Transverse colon (tissue), 4 donors: ENCODE measurements at regions of chr15 and their contacts with region 1.

Region 1: GRCh38 chr15:55108858-55109518 is 87.8 kb downstream of the RSL24D1 start:
- DNase-seq: peak; percentile 61
- H3K4me3 ChIP-seq: no peak overlapping the region
- H3K27ac ChIP-seq: no peak overlapping the region
- H3K4me1 ChIP-seq: no peaks in the 10 kb centered on the region
- H3K27me3 ChIP-seq: no peaks in the 10 kb centered on the region
- CTCF ChIP-seq: peak; percentile 41 to 60 (median 47)
- EP300 ChIP-seq: no peak
- POLR2A ChIP-seq: no peak

Region 2: GRCh38 chr15:53808058-53808706 is 1300.8 kb before region 1 on chr15:
- in situ Hi-C with region 1: loop called in 1 of 4 experiments (anchors 25 kb)
- intact Hi-C with region 1: no loop called
- DNase-seq: no peak
- H3K4me3 ChIP-seq: no peak overlapping the region
- H3K27ac ChIP-seq: no peak overlapping the region
- H3K4me1 ChIP-seq: peaks cover 0 to 9% (median 0%) of the 10 kb centered on the region in 4 donors
- H3K27me3 ChIP-seq: no peaks in the 10 kb centered on the region
- CTCF ChIP-seq: peak; percentile 50 to 74 (median 69)
- EP300 ChIP-seq: no peak
- POLR2A ChIP-seq: no peak

Region 3: GRCh38 chr15:54082836-54083492 is 1026.0 kb before region 1 on chr15:
- in situ Hi-C with region 1: loop called in 1 of 4 experiments (anchors 25 kb)
- intact Hi-C with region 1: no loop called
- DNase-seq: no peak
- H3K4me3 ChIP-seq: no peak overlapping the region
- H3K27ac ChIP-seq: no peak overlapping the region
- H3K4me1 ChIP-seq: no peaks in the 10 kb centered on the region
- H3K27me3 ChIP-seq: no peaks in the 10 kb centered on the region
- CTCF ChIP-seq: peak; percentile 42 to 64 (median 51)
- EP300 ChIP-seq: no peak
- POLR2A ChIP-seq: no peak

Region 4: GRCh38 chr15:55230051-55230670 is 121.2 kb after region 1 on chr15:
- in situ Hi-C with region 1: no loop called
- intact Hi-C with region 1: no loop called
- DNase-seq: no peak
- H3K4me3 ChIP-seq: no peak overlapping the region
- H3K27ac ChIP-seq: no peak overlapping the region
- H3K4me1 ChIP-seq: peaks cover 0 to 6% (median 3%) of the 10 kb centered on the region in 4 donors
- H3K27me3 ChIP-seq: no peaks in the 10 kb centered on the region
- CTCF ChIP-seq: no peak
- EP300 ChIP-seq: no peak
- POLR2A ChIP-seq: no peak

Region 5: DNA sequence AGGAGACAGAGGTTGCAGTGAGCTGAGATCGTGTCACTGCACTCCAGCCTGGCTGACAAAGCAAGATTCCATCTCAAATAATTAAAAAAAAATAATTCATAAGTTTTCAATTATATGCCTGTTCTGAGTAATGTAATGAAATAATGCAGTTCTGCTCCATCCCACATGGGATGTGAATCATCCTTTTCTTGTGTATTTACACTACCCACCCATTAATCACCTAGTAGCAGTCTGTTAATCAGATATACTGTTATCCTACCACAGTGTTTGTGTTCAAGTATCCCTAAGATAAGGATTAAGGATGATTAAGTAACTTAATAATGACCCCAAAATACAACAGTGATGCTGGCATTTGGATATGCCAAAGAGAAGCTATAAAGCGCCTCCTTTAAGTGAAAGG is 248.8 kb after region 1 on chr15:
- in situ Hi-C with region 1: no loop called
- intact Hi-C with region 1: no loop called
- DNase-seq: no peak
- H3K4me3 ChIP-seq: no peak overlapping the region
- H3K27ac ChIP-seq: no peak overlapping the region
- H3K4me1 ChIP-seq: no peaks in the 10 kb centered on the region
- H3K27me3 ChIP-seq: no peaks in the 10 kb centered on the region
- CTCF ChIP-seq: no peak
- EP300 ChIP-seq: no peak
- POLR2A ChIP-seq: no peak

Region 6: DNA sequence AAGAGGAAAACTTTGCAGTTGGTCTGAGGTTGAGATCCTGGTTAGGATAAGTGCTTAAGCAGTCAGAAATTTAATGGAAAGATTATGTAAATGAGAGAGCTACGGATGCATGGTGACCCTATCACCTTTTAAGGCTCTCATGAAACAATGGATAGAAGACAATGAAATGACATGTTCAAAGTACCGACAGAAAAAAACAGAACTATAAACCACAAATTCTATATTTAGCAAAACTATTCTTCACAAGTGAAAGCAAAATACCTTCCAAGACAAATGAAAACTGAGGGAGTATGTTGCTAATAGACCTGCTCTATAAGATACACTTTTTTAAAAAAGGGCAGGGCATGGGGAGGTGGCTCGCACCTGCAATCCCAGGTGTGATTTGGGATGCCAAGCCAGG is 366.9 kb after region 1 on chr15:
- in situ Hi-C with region 1: no loop called
- intact Hi-C with region 1: no loop called
- DNase-seq: no peak
- H3K4me3 ChIP-seq: no peak overlapping the region
- H3K27ac ChIP-seq: no peak overlapping the region
- H3K4me1 ChIP-seq: no peaks in the 10 kb centered on the region
- H3K27me3 ChIP-seq: no peaks in the 10 kb centered on the region
- CTCF ChIP-seq: no peak
- EP300 ChIP-seq: no peak
- POLR2A ChIP-seq: no peak